PC-9 (cell line): ENCODE measurements at regions of chr1 and their contacts with region 1.

Region 1: DNA sequence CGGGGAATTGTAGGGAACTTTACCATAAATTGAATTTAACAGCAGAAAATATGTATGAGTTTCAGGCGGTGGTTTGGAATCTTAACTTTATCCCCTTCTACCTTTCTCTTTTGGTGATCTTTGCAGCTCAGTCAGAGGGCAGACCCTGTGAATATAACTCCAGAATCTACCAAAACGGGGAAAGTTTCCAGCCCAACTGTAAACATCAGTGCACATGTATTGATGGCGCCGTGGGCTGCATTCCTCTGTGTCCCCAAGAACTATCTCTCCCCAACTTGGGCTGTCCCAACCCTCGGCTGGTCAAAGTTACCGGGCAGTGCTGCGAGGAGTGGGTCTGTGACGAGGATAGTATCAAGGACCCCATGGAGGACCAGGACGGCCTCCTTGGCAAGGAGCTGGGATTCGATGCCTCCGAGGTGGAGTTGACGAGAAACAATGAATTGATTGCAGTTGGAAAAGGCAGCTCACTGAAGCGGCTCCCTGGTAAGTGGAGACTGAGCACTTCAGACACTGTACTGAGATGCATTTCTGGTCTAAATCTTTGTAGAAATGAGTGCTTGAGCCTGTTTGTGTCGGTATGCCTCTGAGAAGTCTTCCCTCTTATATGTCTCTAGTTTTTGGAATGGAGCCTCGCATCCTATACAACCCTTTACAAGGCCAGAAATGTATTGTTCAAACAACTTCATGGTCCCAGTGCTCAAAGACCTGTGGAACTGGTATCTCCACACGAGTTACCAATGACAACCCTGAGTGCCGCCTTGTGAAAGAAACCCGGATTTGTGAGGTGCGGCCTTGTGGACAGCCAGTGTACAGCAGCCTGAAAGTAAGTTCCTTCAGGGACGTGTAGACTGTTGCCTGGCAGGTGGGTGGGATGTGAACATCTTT is 1.5 kb downstream of the CCN1 start:
- DNase-seq: peak; percentile 70 to 94
- H3K4me3 ChIP-seq: peak overlapping the region; percentile 65
- H3K27ac ChIP-seq: peak overlapping the region; percentile 86
- H3K4me1 ChIP-seq: peaks cover 51% of the 10 kb centered on the region
- H3K27me3 ChIP-seq: no peaks in the 10 kb centered on the region
- CTCF ChIP-seq: peak; percentile 70

Region 2: DNA sequence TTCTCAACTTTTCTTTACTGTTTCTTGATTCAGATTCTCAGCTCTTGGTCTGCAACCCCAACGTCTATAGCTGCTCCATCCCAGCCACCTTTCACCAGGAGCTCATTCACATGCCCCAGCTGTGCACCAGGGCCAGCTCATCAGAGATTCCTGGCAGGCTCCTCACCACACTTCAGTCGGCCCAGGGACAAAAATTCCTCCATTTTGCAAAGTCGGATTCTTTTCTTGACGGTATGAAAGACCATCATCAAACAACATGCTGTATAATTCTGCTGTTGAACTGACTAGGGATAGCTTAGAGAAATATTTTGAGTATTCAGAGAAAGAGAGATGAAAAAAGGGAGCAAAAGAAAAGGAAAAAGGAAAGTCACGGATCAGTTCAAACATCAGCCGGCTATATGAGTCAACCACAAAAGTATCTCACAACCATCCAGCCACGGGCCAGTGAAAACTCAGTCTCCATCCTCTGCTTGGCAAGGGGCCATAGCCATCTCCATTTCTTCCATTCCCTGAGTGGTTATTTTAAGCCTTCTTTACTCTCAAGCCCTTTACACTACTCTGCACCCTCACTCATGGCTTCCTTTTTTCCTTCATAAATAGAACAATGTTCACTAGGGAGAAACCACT is 1169.6 kb before region 1 on chr1:
- CTCF ChIA-PET with region 1: no interaction called
- POLR2A ChIA-PET with region 1: no interaction called
- intact Hi-C with region 1: no loop called
- DNase-seq: peak in 1 of 2 experiments; percentile 33
- H3K4me3 ChIP-seq: no peak overlapping the region
- H3K27ac ChIP-seq: no peak overlapping the region
- H3K4me1 ChIP-seq: peaks cover 21% of the 10 kb centered on the region
- H3K27me3 ChIP-seq: no peaks in the 10 kb centered on the region
- CTCF ChIP-seq: no peak

Region 3: DNA sequence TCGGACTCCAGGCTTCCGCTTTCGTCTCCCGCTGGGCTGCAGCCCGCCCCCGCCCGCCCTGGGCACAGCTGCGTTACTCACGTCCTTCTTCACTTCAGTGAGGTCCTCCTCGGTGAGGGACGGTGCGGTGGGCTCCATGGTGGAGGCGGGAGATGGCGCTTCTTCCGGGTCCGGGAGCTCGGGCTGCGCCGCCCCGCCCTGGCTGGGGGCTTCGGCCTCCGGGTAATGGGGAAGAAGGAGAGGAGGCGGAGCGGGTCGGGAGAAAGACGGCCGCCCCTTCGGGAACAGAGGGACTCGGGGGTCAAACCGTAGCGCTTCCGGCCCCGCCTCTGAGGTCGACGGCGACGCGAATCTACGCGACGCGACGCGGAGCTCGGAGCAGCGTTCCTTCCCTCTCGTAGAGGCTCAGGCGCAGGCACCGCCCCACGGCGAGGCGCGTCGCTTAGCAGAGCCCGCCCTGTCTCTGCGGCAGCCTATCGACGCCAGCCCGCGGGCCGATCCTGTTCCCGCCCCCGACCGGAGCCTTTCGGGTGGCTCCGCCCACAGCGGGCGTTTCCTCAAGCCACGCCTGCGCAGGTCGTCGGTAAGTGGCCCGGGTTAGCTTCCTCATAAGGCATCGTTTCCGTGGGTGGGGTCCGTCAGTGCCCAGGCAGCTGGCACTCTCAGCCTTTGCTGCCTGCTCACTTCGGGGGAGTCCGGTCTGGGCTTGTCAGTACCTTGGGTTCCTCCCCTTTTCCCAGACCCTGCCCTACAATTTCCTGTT is 305.6 kb before region 1 on chr1 and contains the start of gene BCL10:
- CTCF ChIA-PET with region 1: no interaction called
- POLR2A ChIA-PET with region 1: interaction called, 11 read pairs
- intact Hi-C with region 1: no loop called
- DNase-seq: peak; percentile 98 to 99
- H3K4me3 ChIP-seq: peak within 1 kb of the TSS; percentile 92
- H3K27ac ChIP-seq: peak within 1 kb of the TSS; percentile 86
- H3K4me1 ChIP-seq: peaks cover 54% of the 10 kb centered on the region
- H3K27me3 ChIP-seq: no peaks in the 10 kb centered on the region
- CTCF ChIP-seq: no peak
- total RNA-seq, gene BCL10: 30.4 and 32.0 TPM in 2 replicates

Region 4: DNA sequence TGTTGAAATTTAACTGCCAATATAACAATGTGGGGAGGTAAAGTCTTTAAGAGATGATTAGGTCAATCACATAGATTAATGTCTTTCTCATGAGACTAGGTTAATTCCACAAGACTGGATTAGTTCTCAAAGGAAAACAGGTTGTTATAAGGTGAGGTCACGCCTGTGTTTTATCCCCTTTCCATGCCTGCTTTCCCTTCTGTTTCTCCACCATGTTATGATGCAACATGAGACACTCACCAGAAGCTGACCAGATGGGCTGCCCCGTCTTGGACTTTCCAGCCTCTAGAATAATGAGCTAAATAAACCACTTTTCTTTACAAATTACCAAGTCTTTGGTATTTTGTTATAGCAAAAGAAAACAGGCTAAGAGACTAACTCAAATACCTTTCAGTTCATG is 187.9 kb before region 1 on chr1:
- CTCF ChIA-PET with region 1: no interaction called
- POLR2A ChIA-PET with region 1: no interaction called
- intact Hi-C with region 1: no loop called
- DNase-seq: no peak
- H3K4me3 ChIP-seq: no peak overlapping the region
- H3K27ac ChIP-seq: no peak overlapping the region
- H3K4me1 ChIP-seq: no peaks in the 10 kb centered on the region
- H3K27me3 ChIP-seq: no peaks in the 10 kb centered on the region
- CTCF ChIP-seq: no peak

Region 5: GRCh38 chr1:85544689-85545215 is 37.3 kb before region 1 on chr1:
- CTCF ChIA-PET with region 1: no interaction called
- POLR2A ChIA-PET with region 1: no interaction called
- intact Hi-C with region 1: no loop called
- DNase-seq: peak; percentile 65 to 99
- H3K4me3 ChIP-seq: peak overlapping the region; percentile 14; the same call in 1 of the 2 replicates
- H3K27ac ChIP-seq: peak overlapping the region; percentile 75
- H3K4me1 ChIP-seq: peaks cover 57% of the 10 kb centered on the region
- H3K27me3 ChIP-seq: no peaks in the 10 kb centered on the region
- CTCF ChIP-seq: no peak

Region 6: GRCh38 chr1:85612704-85613361 is 30.8 kb after region 1 on chr1:
- CTCF ChIA-PET with region 1: no interaction called
- POLR2A ChIA-PET with region 1: interaction called, 23 read pairs
- intact Hi-C with region 1: no loop called
- DNase-seq: peak; percentile 60 to 98
- H3K4me3 ChIP-seq: peak overlapping the region; percentile 12; the same call in 1 of the 2 replicates
- H3K27ac ChIP-seq: peak overlapping the region; percentile 91
- H3K4me1 ChIP-seq: peaks cover 48% of the 10 kb centered on the region
- H3K27me3 ChIP-seq: no peaks in the 10 kb centered on the region
- CTCF ChIP-seq: peak; percentile 65

Region 7: DNA sequence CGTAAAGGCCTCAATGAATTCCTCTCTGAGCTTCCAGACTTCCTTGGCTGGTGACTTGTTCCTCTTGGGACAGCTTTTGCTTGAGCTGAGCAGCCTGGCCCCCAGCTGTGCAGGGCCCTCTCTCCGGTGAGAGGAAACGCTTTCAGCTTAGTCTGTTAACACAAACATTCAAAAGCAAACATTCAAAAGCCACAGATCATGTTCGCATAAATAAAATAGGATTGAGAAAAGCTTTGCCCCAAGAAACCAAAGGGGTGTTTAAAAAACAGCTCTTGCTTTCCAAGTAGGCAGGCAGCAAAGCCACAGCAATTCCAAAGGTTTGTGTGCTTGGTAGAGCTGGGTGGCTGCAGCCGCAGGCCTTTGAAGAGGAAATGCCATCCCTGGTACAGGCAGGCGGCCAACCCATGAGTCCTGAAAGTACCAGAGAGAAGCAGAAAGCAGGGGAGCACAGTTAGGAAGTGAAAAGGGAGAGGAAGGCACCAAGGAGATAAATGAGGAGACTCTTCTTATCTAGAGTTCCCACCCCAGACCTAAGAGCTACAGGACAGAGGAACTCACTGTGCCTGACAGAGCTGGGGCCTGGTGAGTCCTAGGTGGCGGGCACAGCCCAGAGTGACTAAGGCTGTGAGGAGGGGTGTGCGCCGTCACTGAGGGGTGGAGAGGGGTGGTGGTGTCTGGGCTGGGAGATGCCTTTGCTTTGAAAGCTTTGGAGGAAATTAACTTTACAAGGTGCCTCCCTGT is 46.9 kb after region 1 on chr1:
- CTCF ChIA-PET with region 1: no interaction called
- POLR2A ChIA-PET with region 1: interaction called, 28 read pairs
- intact Hi-C with region 1: no loop called
- DNase-seq: peak in 1 of 2 experiments; percentile 70
- H3K4me3 ChIP-seq: no peak overlapping the region
- H3K27ac ChIP-seq: no peak overlapping the region
- H3K4me1 ChIP-seq: no peaks in the 10 kb centered on the region
- H3K27me3 ChIP-seq: no peaks in the 10 kb centered on the region
- CTCF ChIP-seq: no peak

Region 8: GRCh38 chr1:85850238-85850637 is 268.2 kb after region 1 on chr1:
- CTCF ChIA-PET with region 1: no interaction called
- POLR2A ChIA-PET with region 1: no interaction called
- intact Hi-C with region 1: loop called (anchors 1 kb)
- DNase-seq: peak; percentile 17 to 97
- H3K4me3 ChIP-seq: no peak overlapping the region
- H3K27ac ChIP-seq: peak overlapping the region; percentile 61
- H3K4me1 ChIP-seq: peaks cover 29% of the 10 kb centered on the region
- H3K27me3 ChIP-seq: no peaks in the 10 kb centered on the region
- CTCF ChIP-seq: peak; percentile 57